ENCODE measurements at regions of chr19 and their contacts with region 1.

Region 1: DNA sequence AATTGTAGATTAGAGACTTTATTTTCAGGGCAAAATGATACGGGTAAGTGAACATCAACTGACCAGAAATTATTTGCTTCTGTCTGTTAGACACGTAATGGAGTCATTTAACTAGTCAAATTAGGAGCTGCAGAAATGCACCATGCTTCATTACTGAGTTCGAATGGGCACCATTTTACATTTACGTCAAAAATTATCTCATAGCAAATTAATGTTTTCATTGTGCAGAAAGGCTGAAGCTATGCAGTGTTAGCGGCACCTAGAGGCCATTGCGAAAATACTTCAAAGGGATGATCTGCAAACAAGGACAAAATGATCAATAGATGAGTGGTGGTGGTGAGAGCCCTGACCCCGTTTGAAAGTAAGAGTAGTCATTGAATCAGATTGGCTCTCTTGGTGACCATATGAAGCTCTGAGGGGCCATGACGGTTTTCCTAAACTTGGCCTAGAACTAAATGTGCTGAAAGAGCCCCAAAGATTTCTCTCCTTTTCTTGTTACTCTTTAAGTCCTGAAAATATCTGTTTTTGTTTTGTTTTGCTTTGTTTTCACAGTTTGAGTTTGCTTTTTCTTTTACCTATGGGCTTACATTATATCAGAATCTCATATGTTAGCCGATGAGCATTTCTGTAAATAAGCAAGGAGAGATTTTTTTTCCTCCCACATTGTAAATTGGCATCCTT is 277.9 kb downstream of the ZNF536 start:
- DNase-seq: peak; percentile 56
- H3K4me3 Mint-ChIP-seq: no peak overlapping the region
- H3K27ac Mint-ChIP-seq: no peak overlapping the region
- H3K4me1 Mint-ChIP-seq: no peaks in the 10 kb centered on the region
- H3K27me3 Mint-ChIP-seq: no peaks in the 10 kb centered on the region
- CTCF ChIP-seq: peak; percentile 61

Region 2: GRCh38 chr19:29735800-29736199 is 914.3 kb before region 1 on chr19:
- CTCF ChIA-PET with region 1: interaction called, 7 read pairs
- POLR2A ChIA-PET with region 1: no interaction called
- intact Hi-C with region 1: loop called (anchors 1 kb)
- DNase-seq: no peak
- H3K4me3 Mint-ChIP-seq: no peak overlapping the region
- H3K27ac Mint-ChIP-seq: no peak overlapping the region
- H3K4me1 Mint-ChIP-seq: no peaks in the 10 kb centered on the region
- H3K27me3 Mint-ChIP-seq: peaks cover 59% of the 10 kb centered on the region
- CTCF ChIP-seq: no peak

Region 3: DNA sequence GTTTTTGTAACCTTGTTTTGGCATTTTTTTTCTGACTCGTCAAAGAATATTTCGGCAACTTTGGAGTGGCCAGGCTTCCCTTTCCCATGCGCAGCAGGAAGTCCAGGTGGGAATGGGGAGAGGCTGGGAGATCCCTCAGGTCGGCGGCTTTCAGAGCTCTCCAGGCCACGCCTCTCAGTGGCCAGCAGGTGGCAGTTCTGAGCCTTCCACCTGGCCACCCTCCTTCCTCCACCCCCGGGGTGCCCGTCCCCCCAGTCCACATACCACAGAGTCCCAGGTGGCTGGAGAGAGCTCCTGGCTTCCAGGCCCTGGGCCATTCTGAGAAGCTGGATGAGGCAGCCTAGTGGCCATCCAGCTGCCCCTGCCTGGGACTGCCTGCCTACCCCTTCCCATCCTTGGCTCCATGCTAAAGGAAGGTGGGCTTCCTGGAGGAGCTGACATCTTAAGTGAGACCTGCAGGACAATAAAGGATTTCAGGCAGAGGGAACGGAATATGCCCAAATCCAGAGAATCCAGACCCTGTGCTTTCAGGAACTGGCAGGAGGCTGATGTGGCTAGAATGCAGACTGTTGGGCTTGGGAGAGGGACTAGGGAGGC is 792.0 kb before region 1 on chr19:
- CTCF ChIA-PET with region 1: interaction called, 10 read pairs
- POLR2A ChIA-PET with region 1: no interaction called
- intact Hi-C with region 1: loop called (anchors 5 kb)
- DNase-seq: peak; percentile 38
- H3K4me3 Mint-ChIP-seq: no peak overlapping the region
- H3K27ac Mint-ChIP-seq: no peak overlapping the region
- H3K4me1 Mint-ChIP-seq: no peaks in the 10 kb centered on the region
- H3K27me3 Mint-ChIP-seq: peaks cover 15% of the 10 kb centered on the region
- CTCF ChIP-seq: peak; percentile 52

Measured in MCF 10A (cell line).